Activated naive CD4-positive, alpha-beta T cell treated with anti-CD3 and anti-CD28 coated beads for 36 hours (primary cell): ENCODE measurements at regions of chr3 and their contacts with region 1.

Region 1: GRCh38 chr3:18740631-18741583 is 315.8 kb upstream of the SATB1 start:
- DNase-seq: peak; percentile 77
- H3K4me3 Mint-ChIP-seq: peak overlapping the region; percentile 63
- H3K27ac Mint-ChIP-seq: peak overlapping the region; percentile 97
- H3K4me1 Mint-ChIP-seq: peaks cover 88% of the 10 kb centered on the region
- H3K27me3 Mint-ChIP-seq: no peaks in the 10 kb centered on the region

Region 2: GRCh38 chr3:17742108-17742879 is 998.6 kb before region 1 on chr3 and contains the start of gene TBC1D5:
- CTCF ChIA-PET with region 1: no interaction called
- intact Hi-C with region 1: loop called (anchors 5 kb)
- DNase-seq: peak; percentile 95
- H3K4me3 Mint-ChIP-seq: peak within 1 kb of the TSS; percentile 92
- H3K27ac Mint-ChIP-seq: peak within 1 kb of the TSS; percentile 94
- H3K4me1 Mint-ChIP-seq: peaks cover 40% of the 10 kb centered on the region
- H3K27me3 Mint-ChIP-seq: no peaks in the 10 kb centered on the region
- total RNA-seq, gene TBC1D5: 54.4 to 57.2 TPM

Region 3: DNA sequence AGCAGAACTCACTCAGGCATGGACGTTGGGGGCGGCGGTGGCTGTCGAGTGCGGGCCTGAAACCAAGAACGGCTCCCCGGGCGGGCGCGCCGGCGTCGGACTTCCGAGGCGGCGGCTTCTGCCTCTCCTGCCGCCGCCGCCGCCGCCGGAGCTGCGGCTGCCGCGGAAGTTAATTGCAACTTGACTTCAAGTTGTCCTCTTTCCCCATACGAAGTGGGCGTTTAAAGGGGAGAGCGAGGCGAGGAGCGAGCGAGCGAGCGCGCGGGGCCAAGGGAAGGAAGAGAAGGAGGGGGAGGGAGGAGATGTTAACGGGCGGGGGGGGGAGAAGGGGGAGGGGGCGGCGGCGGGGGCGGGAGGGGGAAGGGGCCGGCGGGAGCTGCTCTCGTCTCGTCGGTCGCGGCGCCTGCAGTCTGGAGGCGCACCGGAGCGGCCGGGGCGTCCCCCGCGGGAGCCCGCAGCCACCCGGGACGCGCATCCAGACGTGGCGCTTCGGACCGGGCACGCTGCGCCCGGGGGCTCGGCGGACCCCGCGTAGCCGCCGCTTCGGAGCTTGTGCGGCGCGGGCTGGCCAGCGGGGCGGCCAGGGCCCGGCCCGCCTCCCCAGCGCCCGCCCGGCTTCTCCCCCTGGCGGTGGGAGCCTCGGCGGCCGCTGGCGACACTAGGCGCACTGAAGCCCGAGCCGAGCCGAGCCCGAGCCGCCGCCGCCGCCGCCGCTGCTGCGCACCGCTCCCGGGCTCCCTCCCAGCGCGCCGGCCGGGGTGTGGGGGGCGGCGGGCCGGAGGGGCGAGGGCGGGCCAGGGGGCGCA is 296.1 kb before region 1 on chr3:
- CTCF ChIA-PET with region 1: interaction called, 3 read pairs
- intact Hi-C with region 1: loop called (anchors 1 kb)
- DNase-seq: peak; percentile 83
- H3K4me3 Mint-ChIP-seq: peak overlapping the region; percentile 94
- H3K27ac Mint-ChIP-seq: peak overlapping the region; percentile 97
- H3K4me1 Mint-ChIP-seq: peaks cover 36% of the 10 kb centered on the region
- H3K27me3 Mint-ChIP-seq: no peaks in the 10 kb centered on the region

Region 4: DNA sequence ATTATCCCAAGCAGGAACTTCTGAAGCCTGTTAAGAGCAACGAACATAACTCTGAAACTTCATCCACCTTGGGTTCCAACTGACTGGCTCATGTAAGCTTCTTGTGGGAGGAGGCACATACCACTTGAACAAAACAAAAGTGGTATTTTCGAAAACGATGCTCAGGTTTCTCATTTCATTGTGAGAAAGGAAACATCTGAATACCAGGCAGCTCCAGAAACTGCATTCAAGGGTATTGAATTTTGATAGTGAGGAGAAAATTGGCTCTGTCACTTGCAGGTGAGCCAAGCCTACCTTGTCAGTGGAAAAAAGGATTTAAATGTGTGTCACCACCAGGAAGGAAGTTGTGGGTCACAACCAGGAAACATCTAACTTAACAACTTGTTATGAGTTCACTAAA is 97.6 kb before region 1 on chr3:
- CTCF ChIA-PET with region 1: no interaction called
- intact Hi-C with region 1: loop called (anchors 1 kb)
- DNase-seq: peak; percentile 36
- H3K4me3 Mint-ChIP-seq: no peak overlapping the region
- H3K27ac Mint-ChIP-seq: peak overlapping the region; percentile 69
- H3K4me1 Mint-ChIP-seq: peaks cover 60% of the 10 kb centered on the region
- H3K27me3 Mint-ChIP-seq: no peaks in the 10 kb centered on the region

Region 5: DNA sequence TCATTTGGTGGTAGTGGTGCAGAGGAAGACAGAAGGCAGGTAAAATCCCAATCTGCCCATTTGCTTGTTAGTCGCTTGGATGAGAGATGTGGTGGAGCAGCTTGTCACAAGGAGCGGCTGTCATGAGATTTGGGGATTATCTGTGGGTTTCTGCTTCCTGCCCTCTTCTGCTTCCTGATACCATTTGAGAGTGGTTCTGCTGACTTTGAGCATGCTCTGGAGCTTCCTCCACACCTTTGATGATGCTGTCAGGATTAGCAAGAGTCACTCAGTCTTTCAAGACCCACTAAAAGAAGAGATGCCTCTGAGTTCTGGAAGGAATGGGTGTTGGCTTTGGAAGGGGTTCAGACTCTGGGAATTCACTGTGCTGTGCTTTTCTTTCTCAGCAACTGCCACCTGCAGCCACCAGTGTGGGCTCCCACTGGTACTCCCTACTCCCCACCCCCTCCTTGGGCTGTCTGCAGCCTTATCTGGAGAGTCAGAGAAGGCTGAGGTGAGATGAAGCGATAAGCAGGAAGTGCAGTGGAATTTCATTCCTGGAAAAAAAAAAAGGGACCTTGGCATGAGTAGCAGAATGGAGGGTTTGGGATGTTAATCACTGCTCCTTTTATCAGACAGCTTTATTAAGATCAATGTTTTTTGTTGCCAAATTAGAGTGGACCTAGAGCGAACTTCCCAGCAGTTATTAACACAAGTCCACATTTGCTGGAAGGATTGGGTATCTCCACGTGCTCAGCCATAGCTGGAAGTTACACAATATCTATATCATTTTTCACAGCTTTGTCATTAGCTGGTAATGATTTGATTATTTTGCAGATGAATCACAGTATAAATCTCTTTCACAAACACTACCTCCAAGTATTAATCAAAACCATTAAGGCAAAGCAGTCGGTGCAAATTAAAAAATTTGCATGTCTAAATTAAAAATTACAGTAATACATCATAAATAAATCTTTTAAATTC is 82.8 kb before region 1 on chr3:
- CTCF ChIA-PET with region 1: interaction called, 3 read pairs
- intact Hi-C with region 1: loop called (anchors 1 kb)
- DNase-seq: peak; percentile 64
- H3K4me3 Mint-ChIP-seq: peak overlapping the region; percentile 46
- H3K27ac Mint-ChIP-seq: peak overlapping the region; percentile 62
- H3K4me1 Mint-ChIP-seq: peaks cover 55% of the 10 kb centered on the region
- H3K27me3 Mint-ChIP-seq: no peaks in the 10 kb centered on the region

Region 6: DNA sequence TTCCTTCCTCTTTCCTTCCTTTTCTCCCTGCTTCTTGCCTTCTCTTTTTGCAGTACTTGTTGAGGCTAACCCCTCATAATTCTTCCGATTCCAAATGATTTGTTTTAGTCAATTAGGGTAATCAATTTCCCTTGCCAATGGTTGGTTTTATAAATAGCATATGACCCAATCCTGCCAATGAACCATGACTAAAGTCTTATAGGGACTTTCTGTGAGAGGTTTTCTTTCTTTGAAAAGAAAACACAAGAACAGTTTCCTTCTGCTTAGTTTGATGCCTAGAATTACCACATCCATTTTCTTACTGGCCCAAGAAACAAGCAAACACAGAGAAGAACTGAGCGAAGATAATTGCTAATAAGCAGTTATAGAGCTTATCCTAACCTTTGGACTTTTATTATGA is 23.3 kb before region 1 on chr3:
- CTCF ChIA-PET with region 1: interaction called, 26 read pairs
- intact Hi-C with region 1: loop called (anchors 1 kb)
- DNase-seq: no peak
- H3K4me3 Mint-ChIP-seq: no peak overlapping the region
- H3K27ac Mint-ChIP-seq: peak overlapping the region; percentile 84
- H3K4me1 Mint-ChIP-seq: peaks cover 71% of the 10 kb centered on the region
- H3K27me3 Mint-ChIP-seq: no peaks in the 10 kb centered on the region

Region 7: GRCh38 chr3:18758047-18758704 is 17.3 kb after region 1 on chr3:
- CTCF ChIA-PET with region 1: interaction called, 10 read pairs
- intact Hi-C with region 1: loop called (anchors 1 kb)
- DNase-seq: peak; percentile 38
- H3K4me3 Mint-ChIP-seq: no peak overlapping the region
- H3K27ac Mint-ChIP-seq: peak overlapping the region; percentile 57
- H3K4me1 Mint-ChIP-seq: peaks cover 43% of the 10 kb centered on the region
- H3K27me3 Mint-ChIP-seq: no peaks in the 10 kb centered on the region